ENCODE measurements at regions of chr1 and their contacts with region 1.

Region 1: GRCh38 chr1:42479599-42479998 is 16.5 kb downstream of the CCDC30 start:
- DNase-seq: no peak
- ATAC-seq: peak; percentile 89
- H3K4me3 ChIP-seq: no peak overlapping the region
- H3K27ac ChIP-seq: no peak overlapping the region
- H3K4me1 ChIP-seq: no peaks in the 10 kb centered on the region
- H3K27me3 ChIP-seq: no peaks in the 10 kb centered on the region; the same call in 1 of the 2 replicates
- CTCF ChIP-seq: peak; percentile 38

Region 2: DNA sequence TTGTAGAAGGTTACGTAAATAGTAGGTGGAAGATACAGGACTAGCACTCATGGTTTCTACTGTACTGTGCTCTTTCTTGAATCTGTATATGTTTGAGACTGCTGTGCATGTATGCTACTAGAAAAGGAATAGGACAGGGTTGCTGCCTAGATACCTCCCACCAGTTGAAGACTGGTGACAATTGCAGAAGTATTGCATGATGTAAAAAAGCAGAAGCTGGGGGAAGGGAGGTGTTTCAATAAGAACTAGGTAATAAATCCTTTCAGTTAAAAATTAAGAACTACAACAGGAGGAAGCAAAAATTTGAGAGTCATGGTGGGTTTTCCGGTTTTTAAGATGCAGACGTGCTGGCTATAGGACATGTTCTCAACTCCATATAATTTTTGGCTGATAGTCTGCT is 71.6 kb after region 1 on chr1:
- CTCF ChIA-PET with region 1: no interaction called
- POLR2A ChIA-PET with region 1: interaction called, 14 read pairs
- in situ Hi-C with region 1: no loop called
- intact Hi-C with region 1: no loop called
- DNase-seq: no peak
- ATAC-seq: no peak
- H3K4me3 ChIP-seq: no peak overlapping the region
- H3K27ac ChIP-seq: no peak overlapping the region
- H3K4me1 ChIP-seq: no peaks in the 10 kb centered on the region
- H3K27me3 ChIP-seq: no peaks in the 10 kb centered on the region
- CTCF ChIP-seq: no peak